Adrenal gland (tissue), 19 donors: ENCODE measurements at regions of chr7 and their contacts with region 1.

Region 1: GRCh38 chr7:25259587-25260243 is 31.4 kb upstream of the NPVF start:
- DNase-seq: peak; percentile 68 to 92 (median 82)
- H3K4me3 ChIP-seq: no peak overlapping the region
- H3K27ac ChIP-seq: no peak overlapping the region
- H3K4me1 ChIP-seq: peaks cover 0 to 7% of the 10 kb centered on the region in 2 donors
- H3K27me3 ChIP-seq: no peaks in the 10 kb centered on the region
- CTCF ChIP-seq: peak; percentile 64 to 96 (median 90)
- POLR2A ChIP-seq: no peak

Region 2: GRCh38 chr7:25574828-25575227 is 315.1 kb after region 1 on chr7:
- intact Hi-C with region 1: loop called in 1 of 2 experiments (anchors 5 kb)
- DNase-seq: no peak
- H3K4me3 ChIP-seq: no peak overlapping the region
- H3K27ac ChIP-seq: no peak overlapping the region
- H3K4me1 ChIP-seq: no peaks in the 10 kb centered on the region
- H3K27me3 ChIP-seq: no peaks in the 10 kb centered on the region
- CTCF ChIP-seq: no peak
- POLR2A ChIP-seq: no peak